PC-3 (cell line): ENCODE measurements at regions of chr11 and their contacts with region 1.

Region 1: GRCh38 chr11:70467201-70468085 is 69.1 kb downstream of the CTTN start:
- DNase-seq: peak; percentile 85
- ATAC-seq: peak; percentile 65
- H3K4me3 ChIP-seq: no peak overlapping the region
- H3K27ac ChIP-seq: no peak overlapping the region
- H3K4me1 ChIP-seq: no peaks in the 10 kb centered on the region
- H3K27me3 ChIP-seq: no peaks in the 10 kb centered on the region
- CTCF ChIP-seq: peak; percentile 99

Region 2: GRCh38 chr11:70226782-70227369 is 240.6 kb before region 1 on chr11:
- CTCF ChIA-PET with region 1: no interaction called
- POLR2A ChIA-PET with region 1: no interaction called
- intact Hi-C with region 1: no loop called
- DNase-seq: peak; percentile 33
- ATAC-seq: no peak
- H3K4me3 ChIP-seq: no peak overlapping the region
- H3K27ac ChIP-seq: no peak overlapping the region
- H3K4me1 ChIP-seq: no peaks in the 10 kb centered on the region
- H3K27me3 ChIP-seq: no peaks in the 10 kb centered on the region
- CTCF ChIP-seq: peak; percentile 63

Region 3: GRCh38 chr11:70432065-70432979 is 35.1 kb before region 1 on chr11:
- CTCF ChIA-PET with region 1: no interaction called
- POLR2A ChIA-PET with region 1: no interaction called
- intact Hi-C with region 1: no loop called
- DNase-seq: no peak
- ATAC-seq: no peak
- H3K4me3 ChIP-seq: no peak overlapping the region
- H3K27ac ChIP-seq: no peak overlapping the region
- H3K4me1 ChIP-seq: no peaks in the 10 kb centered on the region
- H3K27me3 ChIP-seq: no peaks in the 10 kb centered on the region
- CTCF ChIP-seq: no peak

Region 4: DNA sequence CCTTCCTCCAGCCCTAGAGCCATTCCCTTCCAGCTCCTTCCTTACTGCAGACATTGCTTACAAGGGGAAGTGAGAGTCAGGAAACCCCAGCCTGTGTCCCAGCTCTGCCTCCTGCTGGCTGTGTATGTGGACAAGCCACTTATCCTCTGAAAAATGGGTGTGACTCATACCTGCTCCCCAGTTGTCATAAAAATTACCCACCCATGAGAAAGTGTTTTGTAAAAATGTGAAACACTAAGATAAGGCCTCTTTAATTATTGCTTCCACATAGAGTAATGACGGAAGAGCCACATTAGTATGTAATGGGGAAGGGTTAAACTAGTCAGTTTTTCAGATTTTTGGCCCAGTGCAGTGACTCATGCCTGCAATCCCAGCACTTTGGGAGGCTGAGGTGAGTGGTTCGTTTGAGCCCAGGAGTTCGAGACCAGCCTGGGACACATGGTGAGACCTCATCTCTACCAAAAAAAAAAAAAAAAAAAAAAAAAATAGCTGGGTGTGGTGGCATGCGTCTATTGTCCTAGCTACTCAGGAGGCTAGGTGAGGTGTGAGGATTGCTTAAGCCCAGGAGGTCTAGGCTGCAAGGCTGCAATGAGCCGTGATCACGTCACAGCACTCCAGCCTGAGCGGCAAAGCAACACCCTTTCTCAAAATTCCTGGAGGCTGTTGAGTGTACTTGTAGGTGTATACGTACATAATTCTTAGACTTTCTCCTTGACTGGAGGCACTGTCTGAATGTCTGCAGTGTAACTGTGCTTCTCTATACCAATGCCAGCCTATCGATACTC is 15.8 kb after region 1 on chr11:
- CTCF ChIA-PET with region 1: interaction called, 4 read pairs
- POLR2A ChIA-PET with region 1: no interaction called
- intact Hi-C with region 1: loop called (anchors 1 kb)
- DNase-seq: peak; percentile 90
- ATAC-seq: peak; percentile 65
- H3K4me3 ChIP-seq: peak overlapping the region; percentile 11; the same call in 1 of the 2 replicates
- H3K27ac ChIP-seq: peak overlapping the region; percentile 94
- H3K4me1 ChIP-seq: peaks cover 27% of the 10 kb centered on the region
- H3K27me3 ChIP-seq: no peaks in the 10 kb centered on the region
- CTCF ChIP-seq: peak; percentile 88

Region 5: DNA sequence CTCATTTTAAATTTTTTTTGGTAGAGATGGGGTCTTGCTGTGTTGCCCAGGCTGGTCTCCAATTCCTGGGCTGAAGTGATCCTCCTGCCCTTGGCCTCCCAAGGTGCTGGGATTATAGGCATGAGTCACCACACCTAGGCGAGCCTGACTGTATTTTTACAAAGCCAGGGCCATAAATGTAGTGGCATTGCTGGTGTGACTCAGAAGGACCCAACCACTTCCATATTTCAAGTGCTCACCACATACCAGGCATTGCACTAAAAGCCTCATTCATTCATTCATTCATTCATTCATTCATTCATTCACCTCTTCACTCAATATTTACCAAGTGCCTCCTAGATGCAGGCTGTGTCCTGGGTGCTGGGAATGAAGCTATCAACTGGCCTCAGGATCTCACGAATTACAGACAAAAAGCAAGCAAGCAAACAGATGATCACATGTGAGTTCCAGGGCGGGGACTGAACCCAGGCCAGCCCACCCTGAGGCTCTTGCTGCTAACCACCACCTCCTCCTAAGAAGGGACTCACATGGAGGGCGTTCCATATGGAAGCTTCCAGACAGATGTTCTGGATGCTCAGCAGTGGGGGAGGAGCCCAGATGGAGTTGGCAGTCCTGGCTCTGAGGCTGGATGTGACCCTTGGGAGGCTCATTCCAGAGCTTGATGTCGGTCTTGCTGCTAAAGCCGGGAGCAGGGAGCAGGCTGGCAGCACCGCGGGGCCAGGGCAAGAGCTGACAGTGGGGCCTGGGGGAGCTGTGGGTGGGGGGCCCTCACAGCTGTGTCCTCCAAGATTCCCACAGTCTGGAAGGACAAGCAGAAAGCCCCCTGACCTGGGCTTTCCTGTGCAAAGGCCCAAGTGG is 89.7 kb after region 1 on chr11:
- CTCF ChIA-PET with region 1: no interaction called
- POLR2A ChIA-PET with region 1: no interaction called
- intact Hi-C with region 1: no loop called
- DNase-seq: peak; percentile 98
- ATAC-seq: peak; percentile 90
- H3K4me3 ChIP-seq: no peak overlapping the region
- H3K27ac ChIP-seq: peak overlapping the region; percentile 68
- H3K4me1 ChIP-seq: peaks cover 38% of the 10 kb centered on the region
- H3K27me3 ChIP-seq: no peaks in the 10 kb centered on the region
- CTCF ChIP-seq: no peak

Region 6: DNA sequence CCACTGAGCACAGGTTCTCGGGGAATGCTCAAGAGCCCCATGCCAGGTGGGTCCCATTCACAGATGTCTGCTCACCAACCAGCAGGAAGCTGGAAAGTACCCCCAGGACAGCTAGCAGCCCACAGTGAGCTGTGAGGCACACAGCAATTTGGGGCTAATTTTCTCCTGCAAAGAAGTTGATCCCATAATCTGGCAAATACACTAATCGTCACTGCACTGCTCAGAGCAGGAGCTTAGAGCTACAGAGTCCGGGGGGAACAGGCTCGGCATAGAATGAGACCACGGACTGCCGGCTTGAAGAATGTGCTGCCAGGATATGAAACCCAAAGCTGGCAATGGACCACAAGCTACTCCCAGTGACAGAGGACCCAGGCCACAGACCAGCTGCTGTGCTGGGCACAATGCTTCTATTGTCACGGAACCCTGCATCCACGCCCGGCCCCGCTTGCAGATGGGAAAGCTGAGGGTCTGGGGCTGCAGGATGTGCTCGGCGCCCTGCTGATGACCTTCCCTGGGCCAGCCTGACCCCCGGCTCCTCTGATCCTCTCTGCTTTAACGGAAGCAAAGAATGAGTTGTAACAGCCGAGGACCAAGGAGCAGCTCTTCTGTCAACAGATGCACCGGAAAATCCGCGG is 170.6 kb after region 1 on chr11:
- CTCF ChIA-PET with region 1: no interaction called
- POLR2A ChIA-PET with region 1: no interaction called
- intact Hi-C with region 1: no loop called
- DNase-seq: no peak
- ATAC-seq: no peak
- H3K4me3 ChIP-seq: no peak overlapping the region
- H3K27ac ChIP-seq: no peak overlapping the region
- H3K4me1 ChIP-seq: no peaks in the 10 kb centered on the region
- H3K27me3 ChIP-seq: no peaks in the 10 kb centered on the region
- CTCF ChIP-seq: no peak

Region 7: DNA sequence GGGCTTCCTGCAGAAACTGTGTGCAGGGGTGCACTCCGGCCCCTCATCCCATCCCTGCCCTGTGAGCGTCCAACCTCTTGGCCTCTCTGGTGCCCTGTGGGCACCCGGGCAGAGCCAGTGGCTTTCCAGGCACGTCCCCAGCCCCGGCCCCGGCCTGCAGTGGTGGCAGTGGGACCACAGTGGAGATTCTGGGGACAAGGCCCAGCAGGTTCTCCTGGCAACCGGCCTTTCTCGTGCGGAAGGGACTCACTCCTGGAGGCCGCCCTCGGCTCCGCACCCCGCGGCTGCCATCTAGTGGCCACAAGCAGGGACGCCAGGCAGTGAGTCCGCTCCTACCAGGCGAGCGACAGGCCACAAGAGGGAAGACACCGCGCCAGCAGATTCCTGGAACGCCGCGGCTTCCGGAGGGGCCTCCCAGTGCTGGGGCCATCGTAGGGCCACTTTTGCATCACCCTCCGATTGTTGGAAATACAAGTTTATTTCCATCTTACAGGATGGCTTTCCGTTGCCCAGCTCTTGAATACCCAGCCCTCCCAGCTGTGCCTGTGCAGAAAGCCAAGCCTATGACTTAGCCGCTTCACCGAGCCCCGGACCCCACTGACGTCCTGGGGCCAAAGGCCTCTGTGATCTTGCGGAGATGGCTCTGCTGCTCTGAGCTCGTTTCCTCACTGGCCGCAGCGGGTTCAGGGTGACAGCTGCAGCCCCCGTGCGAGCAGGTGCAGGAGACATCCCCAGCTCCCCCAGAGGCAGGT is 288.1 kb after region 1 on chr11:
- CTCF ChIA-PET with region 1: no interaction called
- POLR2A ChIA-PET with region 1: no interaction called
- intact Hi-C with region 1: loop called (anchors 1 kb)
- DNase-seq: peak; percentile 85
- ATAC-seq: peak; percentile 99
- H3K4me3 ChIP-seq: no peak overlapping the region
- H3K27ac ChIP-seq: no peak overlapping the region
- H3K4me1 ChIP-seq: peaks cover 12% of the 10 kb centered on the region; the same call in 1 of the 2 replicates
- H3K27me3 ChIP-seq: no peaks in the 10 kb centered on the region
- CTCF ChIP-seq: peak; percentile 91